ENCODE measurements at regions of chr3 and their contacts with region 1.

Region 1: GRCh38 chr3:193572426-193572908 is 17.8 kb upstream of the ATP13A4 start:
- DNase-seq: peak; percentile 62
- ATAC-seq: peak; percentile 60
- H3K4me3 Mint-ChIP-seq: no peak overlapping the region
- H3K27ac Mint-ChIP-seq: no peak overlapping the region
- H3K4me1 Mint-ChIP-seq: no peaks in the 10 kb centered on the region
- H3K27me3 Mint-ChIP-seq: no peaks in the 10 kb centered on the region

Region 2: GRCh38 chr3:193465992-193466608 is 106.4 kb before region 1 on chr3:
- CTCF ChIA-PET with region 1: interaction called, 11 read pairs
- DNase-seq: no peak
- ATAC-seq: no peak
- H3K4me3 Mint-ChIP-seq: no peak overlapping the region
- H3K27ac Mint-ChIP-seq: no peak overlapping the region
- H3K4me1 Mint-ChIP-seq: peaks cover 4% of the 10 kb centered on the region
- H3K27me3 Mint-ChIP-seq: no peaks in the 10 kb centered on the region